Dorsolateral prefrontal cortex (tissue), 120 donors: ENCODE measurements at regions of chr3 and their contacts with region 1.

Region 1: GRCh38 chr3:30199096-30199759 is 407.2 kb upstream of the TGFBR2 start:
- DNase-seq: peak; percentile 21 to 82 (median 70)
- H3K4me3 ChIP-seq: no peak overlapping the region
- H3K27ac ChIP-seq: no peak overlapping the region
- H3K27me3 ChIP-seq: peaks cover 0 to 1% (median 0%) of the 10 kb centered on the region in 45 donors
- CTCF ChIP-seq: peak; percentile 72 to 98 (median 91)

Region 2: DNA sequence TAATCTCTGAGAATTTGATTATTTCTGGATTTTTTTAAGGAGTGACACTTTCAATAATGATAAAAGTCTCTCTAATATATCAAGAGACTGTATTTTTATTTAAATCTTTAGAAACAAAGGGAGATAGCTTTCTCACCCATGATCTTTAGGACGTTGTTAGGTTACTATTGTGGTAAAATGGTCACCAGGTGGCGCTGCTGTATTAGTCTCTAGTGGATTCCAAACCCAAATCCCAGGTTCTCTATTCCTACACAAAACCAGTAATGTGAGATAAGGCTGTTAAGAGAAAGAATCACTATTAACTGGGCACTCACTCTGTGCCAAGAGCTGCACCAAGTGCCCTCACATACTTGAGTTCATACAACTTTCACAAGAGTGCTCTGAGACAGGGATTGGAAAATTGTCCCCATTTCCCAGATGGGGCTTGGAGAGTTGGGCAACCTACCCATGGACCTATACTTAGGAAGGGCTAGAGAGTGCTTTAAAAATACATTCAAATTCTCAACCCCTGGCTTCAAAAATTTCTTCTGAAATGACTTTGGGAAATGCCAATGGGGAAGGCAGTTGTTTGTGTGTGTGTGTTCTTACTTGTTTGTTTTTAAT is 186.2 kb before region 1 on chr3:
- intact Hi-C with region 1: loop called (anchors 10 kb)
- DNase-seq: peak in 7 of 10 donors; percentile 24 to 78 (median 47)
- H3K4me3 ChIP-seq: no peak overlapping the region
- H3K27ac ChIP-seq: no peak overlapping the region
- H3K27me3 ChIP-seq: peaks cover 0 to 4% (median 0%) of the 10 kb centered on the region in 45 donors
- CTCF ChIP-seq: peak; percentile 50 to 85 (median 72)

Region 3: GRCh38 chr3:30042274-30042859 is 156.9 kb before region 1 on chr3:
- intact Hi-C with region 1: loop called (anchors 2 to 10 kb)
- DNase-seq: peak in 9 of 10 donors; percentile 18 to 78 (median 50)
- H3K4me3 ChIP-seq: no peak overlapping the region
- H3K27ac ChIP-seq: no peak overlapping the region
- H3K27me3 ChIP-seq: peaks cover 0 to 18% (median 0%) of the 10 kb centered on the region in 45 donors
- CTCF ChIP-seq: peak; percentile 54 to 92 (median 78)

Region 4: DNA sequence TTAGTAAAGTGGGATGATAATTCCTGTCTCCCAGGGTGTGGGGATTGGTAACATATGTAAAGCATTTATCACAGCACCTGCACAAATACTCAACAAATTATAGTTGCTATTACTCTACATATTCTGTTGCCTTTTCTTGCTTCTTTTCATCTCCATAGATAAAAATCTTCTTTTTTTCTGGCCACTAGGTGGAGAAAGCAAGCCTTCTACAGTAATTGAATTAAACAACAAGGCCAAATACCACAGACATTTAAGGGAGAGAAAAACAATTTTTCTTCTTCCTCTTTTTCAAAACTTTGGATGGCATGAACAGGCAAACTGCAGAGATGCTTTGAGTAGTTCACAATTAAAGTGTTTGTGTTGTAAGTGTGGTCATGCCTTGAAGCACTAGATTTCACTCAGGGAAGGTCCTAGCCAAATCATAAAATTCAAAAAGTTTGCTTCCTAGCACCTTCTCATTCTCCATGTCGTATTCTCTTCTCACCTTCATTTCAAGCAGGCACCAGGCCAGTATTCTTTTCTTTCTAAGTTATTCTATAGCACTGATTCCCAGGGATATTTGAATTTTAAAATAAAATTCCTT is 86.2 kb before region 1 on chr3:
- intact Hi-C with region 1: loop called (anchors 2 to 5 kb)
- DNase-seq: no peak
- H3K4me3 ChIP-seq: no peak overlapping the region
- H3K27ac ChIP-seq: no peak overlapping the region
- H3K27me3 ChIP-seq: peaks cover 0 to 10% (median 0%) of the 10 kb centered on the region in 45 donors
- CTCF ChIP-seq: peak; percentile 59 to 90 (median 78)